Kidney (tissue), 22 donors: ENCODE measurements at regions of chr4 and their contacts with region 1.

Region 1: GRCh38 chr4:41692717-41693345 is 55.7 kb downstream of the PHOX2B start:
- DNase-seq: peak in 4 of 5 donors; percentile 71 to 74 (median 72)
- H3K4me3 ChIP-seq: no peak overlapping the region
- H3K27ac ChIP-seq: no peak overlapping the region
- H3K4me1 ChIP-seq: no peaks in the 10 kb centered on the region
- H3K27me3 ChIP-seq: no peaks in the 10 kb centered on the region
- CTCF ChIP-seq: peak; percentile 85

Region 2: DNA sequence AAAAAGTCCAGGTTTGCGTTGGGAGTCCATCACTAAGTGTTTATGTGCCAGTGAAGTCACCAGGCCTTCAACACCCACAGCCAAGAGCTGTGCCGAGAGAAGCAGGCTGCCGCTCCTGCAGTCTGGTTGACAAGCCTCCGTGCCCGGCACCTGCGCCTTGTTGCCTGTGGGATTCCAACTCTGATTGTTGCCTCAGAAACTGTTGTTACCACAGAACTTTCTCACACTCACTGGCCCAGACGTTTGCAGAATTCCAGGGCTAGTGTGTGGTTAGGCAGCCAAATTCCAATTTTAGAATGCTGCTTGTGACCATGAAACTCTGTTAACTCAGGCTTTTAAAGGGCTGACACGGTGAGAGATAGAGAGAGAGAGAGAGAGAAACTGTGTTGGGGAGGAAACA is 274.4 kb before region 1 on chr4:
- intact Hi-C with region 1: no loop called
- DNase-seq: peak in 4 of 5 donors; percentile 31 to 50 (median 36)
- H3K4me3 ChIP-seq: no peak overlapping the region
- H3K27ac ChIP-seq: no peak overlapping the region
- H3K4me1 ChIP-seq: peaks cover 0 to 5% (median 0%) of the 10 kb centered on the region in 3 donors
- H3K27me3 ChIP-seq: no peaks in the 10 kb centered on the region
- CTCF ChIP-seq: no peak

Region 3: DNA sequence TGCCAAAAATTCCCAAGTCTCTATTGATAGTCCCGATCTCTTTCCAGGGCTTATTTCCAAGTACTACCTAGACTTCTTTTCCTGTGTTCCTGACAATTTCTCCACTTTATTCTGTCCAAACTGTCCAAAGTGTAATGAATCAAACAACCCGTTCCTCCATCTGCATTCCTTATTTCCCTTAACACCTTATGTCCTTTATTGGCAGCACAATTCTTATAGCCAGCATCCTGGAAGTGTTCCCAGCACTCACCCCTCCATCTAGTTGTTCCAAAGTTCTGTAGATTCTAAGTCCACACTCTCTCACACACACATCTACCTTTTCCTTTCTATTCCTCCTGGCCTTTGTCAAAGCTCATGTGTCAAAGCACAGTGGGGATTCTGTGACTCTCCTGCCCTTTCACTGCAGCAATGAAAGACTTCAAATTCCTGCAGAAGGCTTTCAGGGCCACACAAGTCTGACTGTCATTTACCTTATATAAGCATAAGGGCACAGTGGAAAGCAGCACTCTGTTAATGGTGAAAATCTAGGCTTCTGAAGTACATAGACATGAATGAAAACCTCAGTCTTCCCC is 132.8 kb before region 1 on chr4:
- intact Hi-C with region 1: no loop called
- DNase-seq: no peak
- H3K4me3 ChIP-seq: no peak overlapping the region
- H3K27ac ChIP-seq: no peak overlapping the region
- H3K4me1 ChIP-seq: peaks cover 0 to 4% (median 3%) of the 10 kb centered on the region in 3 donors
- H3K27me3 ChIP-seq: no peaks in the 10 kb centered on the region
- CTCF ChIP-seq: no peak

Region 4: DNA sequence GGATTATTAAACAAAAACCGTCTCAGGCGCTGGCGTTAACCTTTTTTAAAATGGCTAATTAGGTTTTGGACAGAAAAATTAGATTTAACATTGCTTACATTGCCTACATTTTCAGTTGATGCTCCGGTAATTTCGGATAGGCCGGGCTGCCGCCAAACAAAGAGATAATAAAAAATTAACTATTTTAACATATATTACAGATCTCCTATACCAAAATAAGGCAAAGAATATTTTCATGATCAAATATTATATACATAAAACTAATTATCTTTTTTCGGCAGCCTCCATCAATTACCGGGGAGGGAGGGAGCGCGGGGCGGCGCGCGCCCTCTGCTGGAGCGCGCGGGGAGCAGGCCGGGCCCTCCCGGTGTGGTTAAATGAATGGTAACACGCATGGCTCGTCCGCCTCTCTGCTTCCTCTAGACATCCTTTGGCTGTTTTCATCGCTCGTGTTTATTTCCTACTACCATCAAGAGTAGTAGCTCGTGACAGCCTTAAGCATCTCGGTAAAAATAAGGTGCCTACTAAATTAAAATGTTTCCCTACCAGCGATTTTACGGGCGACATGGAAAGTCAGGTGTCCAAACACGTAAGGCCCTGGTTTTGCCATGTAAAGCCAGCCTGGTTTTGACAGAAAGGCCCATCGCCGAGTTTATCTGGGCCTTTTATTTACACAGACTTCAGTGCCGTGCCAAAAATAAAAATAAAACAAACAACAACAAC is 190.0 kb after region 1 on chr4:
- intact Hi-C with region 1: loop called (anchors 10 kb)
- DNase-seq: peak in 4 of 5 donors; percentile 42 to 66 (median 60)
- H3K4me3 ChIP-seq: peak overlapping the region in 2 of 3 donors; percentile 39 to 52
- H3K27ac ChIP-seq: no peak overlapping the region
- H3K4me1 ChIP-seq: peaks cover 0 to 17% (median 0%) of the 10 kb centered on the region in 3 donors
- H3K27me3 ChIP-seq: peaks cover 38% of the 10 kb centered on the region
- CTCF ChIP-seq: peak; percentile 75